Psoas muscle (tissue), 8 donors: ENCODE measurements at regions of chr12 and their contacts with region 1.

Region 1: GRCh38 chr12:71877335-71878121 is 38.0 kb downstream of the TBC1D15 start:
- DNase-seq: no peak
- ATAC-seq: no peak
- H3K4me3 ChIP-seq: no peak overlapping the region
- H3K27ac ChIP-seq: no peak overlapping the region
- H3K4me1 ChIP-seq: peaks cover 19% of the 10 kb centered on the region
- H3K27me3 ChIP-seq: no peaks in the 10 kb centered on the region
- CTCF ChIP-seq: no peak

Region 2: DNA sequence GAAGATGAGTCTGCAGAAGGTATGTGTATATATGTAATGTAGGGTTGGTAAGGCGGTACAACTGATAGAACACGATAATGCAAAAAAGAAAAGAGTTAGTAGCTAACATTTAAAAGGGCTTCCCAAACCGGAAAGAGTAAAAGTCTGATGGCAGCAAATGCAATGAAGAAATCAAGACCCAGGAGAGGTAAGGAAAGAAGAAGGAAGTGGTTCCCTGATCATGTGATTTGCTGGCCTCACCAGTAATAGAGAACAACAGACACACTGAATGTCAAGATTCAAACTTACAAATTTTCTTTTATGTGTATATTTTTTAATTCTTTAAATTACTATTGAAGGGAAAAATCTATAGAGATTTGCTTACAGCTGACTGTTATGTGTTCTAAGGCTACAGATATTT is 232.3 kb before region 1 on chr12:
- intact Hi-C with region 1: no loop called
- DNase-seq: no peak
- ATAC-seq: no peak
- H3K4me3 ChIP-seq: no peak overlapping the region
- H3K27ac ChIP-seq: no peak overlapping the region
- H3K4me1 ChIP-seq: no peaks in the 10 kb centered on the region
- H3K27me3 ChIP-seq: no peaks in the 10 kb centered on the region
- CTCF ChIP-seq: no peak

Region 3: DNA sequence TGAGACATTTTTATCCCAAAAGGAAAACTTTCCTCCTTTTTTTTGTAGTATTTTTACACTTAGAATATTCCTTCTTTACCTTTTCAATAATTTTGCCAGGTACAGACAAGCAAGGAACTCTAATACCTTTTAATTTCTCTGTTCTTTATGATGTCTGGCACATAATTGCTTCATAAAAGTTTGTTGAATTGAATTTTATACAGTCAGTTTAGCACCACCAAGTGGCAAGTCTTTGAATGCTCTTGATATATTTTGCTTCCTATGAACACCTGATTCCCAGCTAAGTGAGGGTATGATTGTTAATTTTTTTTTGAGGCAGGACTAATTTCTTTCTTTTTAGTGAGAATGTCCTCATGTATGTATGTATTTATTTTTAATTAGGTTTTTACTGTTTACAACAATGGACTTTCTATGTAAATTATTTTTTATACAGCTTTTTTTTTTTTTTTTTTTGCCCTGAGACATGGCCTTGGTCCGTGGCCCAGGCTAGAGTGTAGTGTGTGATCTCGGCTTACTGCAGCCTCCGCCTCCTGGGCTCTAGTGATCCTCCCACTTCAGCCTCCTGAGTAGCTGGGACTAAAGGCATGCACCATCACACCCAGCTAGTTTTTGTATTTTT is 31.1 kb before region 1 on chr12:
- intact Hi-C with region 1: loop called in 1 of 2 experiments (anchors 1 kb)
- DNase-seq: no peak
- ATAC-seq: no peak
- H3K4me3 ChIP-seq: no peak overlapping the region
- H3K27ac ChIP-seq: peak overlapping the region; percentile 88
- H3K4me1 ChIP-seq: peaks cover 79% of the 10 kb centered on the region
- H3K27me3 ChIP-seq: no peaks in the 10 kb centered on the region
- CTCF ChIP-seq: peak; percentile 62

Region 4: GRCh38 chr12:72189271-72189670 is 311.7 kb after region 1 on chr12:
- intact Hi-C with region 1: no loop called
- DNase-seq: no peak
- ATAC-seq: no peak
- H3K4me3 ChIP-seq: no peak overlapping the region
- H3K27ac ChIP-seq: no peak overlapping the region
- H3K4me1 ChIP-seq: no peaks in the 10 kb centered on the region
- H3K27me3 ChIP-seq: no peaks in the 10 kb centered on the region
- CTCF ChIP-seq: no peak